Heart left ventricle (tissue), 16 donors: ENCODE measurements at regions of chr3 and their contacts with region 1.

Region 1: GRCh38 chr3:134473868-134474546 is 11.8 kb downstream of the ANAPC13 start:
- DNase-seq: peak in 4 of 5 donors; percentile 60 to 77 (median 76)
- ATAC-seq: peak in 3 of 4 donors; percentile 39 to 64 (median 39)
- H3K4me3 ChIP-seq: no peak overlapping the region
- H3K27ac ChIP-seq: no peak overlapping the region
- H3K4me1 ChIP-seq: peaks cover 0 to 33% (median 8%) of the 10 kb centered on the region in 12 donors
- H3K27me3 ChIP-seq: no peaks in the 10 kb centered on the region
- CTCF ChIP-seq: peak; percentile 72 to 89 (median 84)
- POLR2A ChIP-seq: no peak

Region 2: GRCh38 chr3:134197681-134198261 is 276.2 kb before region 1 on chr3:
- intact Hi-C with region 1: loop called in 1 of 10 experiments (anchors 5 kb)
- DNase-seq: no peak
- ATAC-seq: peak; percentile 52 to 82 (median 80)
- H3K4me3 ChIP-seq: no peak overlapping the region
- H3K27ac ChIP-seq: no peak overlapping the region
- H3K4me1 ChIP-seq: peaks cover 0 to 8% (median 0%) of the 10 kb centered on the region in 12 donors
- H3K27me3 ChIP-seq: no peaks in the 10 kb centered on the region
- CTCF ChIP-seq: peak; percentile 58 to 84 (median 71)
- POLR2A ChIP-seq: no peak

Region 3: GRCh38 chr3:134308350-134308891 is 165.6 kb before region 1 on chr3:
- intact Hi-C with region 1: loop called (anchors 1 to 2 kb)
- DNase-seq: peak; percentile 75 to 85 (median 81)
- ATAC-seq: peak; percentile 63 to 75 (median 68)
- H3K4me3 ChIP-seq: peak overlapping the region in 4 of 12 donors; percentile 26 to 39 (median 36)
- H3K27ac ChIP-seq: peak overlapping the region in 11 of 12 donors; percentile 19 to 82 (median 72)
- H3K4me1 ChIP-seq: peaks cover 2 to 34% (median 23%) of the 10 kb centered on the region in 12 donors
- H3K27me3 ChIP-seq: peaks cover 0 to 4% (median 0%) of the 10 kb centered on the region in 9 donors
- CTCF ChIP-seq: peak; percentile 97 to 100 (median 99)
- POLR2A ChIP-seq: no peak

Region 4: GRCh38 chr3:134357261-134358184 is 116.5 kb before region 1 on chr3:
- intact Hi-C with region 1: loop called in 1 of 10 experiments (anchors 5 kb)
- DNase-seq: peak in 1 of 5 donors; percentile 42
- ATAC-seq: peak; percentile 12 to 51 (median 39)
- H3K4me3 ChIP-seq: no peak overlapping the region
- H3K27ac ChIP-seq: peak overlapping the region; percentile 34 to 100 (median 71)
- H3K4me1 ChIP-seq: peaks cover 10 to 99% (median 70%) of the 10 kb centered on the region in 12 donors
- H3K27me3 ChIP-seq: no peaks in the 10 kb centered on the region
- CTCF ChIP-seq: no peak
- POLR2A ChIP-seq: no peak

Region 5: GRCh38 chr3:134381827-134382442 is 92.1 kb before region 1 on chr3:
- intact Hi-C with region 1: loop called (anchors 2 to 5 kb)
- DNase-seq: no peak
- ATAC-seq: peak in 1 of 4 donors; percentile 7
- H3K4me3 ChIP-seq: no peak overlapping the region
- H3K27ac ChIP-seq: peak overlapping the region in 1 of 12 donors; percentile 63
- H3K4me1 ChIP-seq: peaks cover 0 to 13% (median 6%) of the 10 kb centered on the region in 12 donors
- H3K27me3 ChIP-seq: no peaks in the 10 kb centered on the region
- CTCF ChIP-seq: no peak
- POLR2A ChIP-seq: no peak